Activated CD4-positive, alpha-beta T cell treated with anti-CD3 and anti-CD28 coated beads for 36 hours (primary cell): ENCODE measurements at regions of chr16 and their contacts with region 1.

Region 1: DNA sequence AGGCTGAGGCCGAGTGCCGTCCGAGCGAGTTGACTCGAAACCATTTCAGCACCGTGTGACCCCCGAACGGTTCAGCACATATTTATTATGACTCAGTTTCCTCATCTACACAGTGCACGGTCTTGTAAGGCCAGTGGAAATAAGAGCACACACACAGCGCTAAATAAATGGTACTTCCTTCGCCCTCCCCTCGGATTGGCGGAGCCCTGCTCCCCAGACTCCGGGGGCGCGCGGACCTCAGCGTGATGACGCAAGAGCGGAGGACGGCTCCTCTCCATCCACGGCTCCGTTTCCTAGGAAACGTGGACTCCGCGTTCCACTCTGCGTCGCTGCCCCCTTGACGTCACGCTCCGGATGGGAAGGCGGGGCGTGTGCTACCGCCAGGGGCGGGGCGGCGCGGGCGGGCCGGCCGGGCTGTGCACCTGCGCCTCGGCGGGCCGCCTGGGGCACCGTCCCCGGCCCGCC is at the start of gene PARD6A:
- DNase-seq: peak; percentile 98
- ATAC-seq: peak; percentile 83
- H3K4me3 Mint-ChIP-seq: peak within 1 kb of the TSS; percentile 90
- H3K27ac Mint-ChIP-seq: peak within 1 kb of the TSS; percentile 91
- H3K4me1 Mint-ChIP-seq: peaks cover 21% of the 10 kb centered on the region
- H3K27me3 Mint-ChIP-seq: no peaks in the 10 kb centered on the region
- total RNA-seq, gene PARD6A: 7.8 to 8.7 TPM

Region 2: GRCh38 chr16:67159593-67160406 is 500.8 kb before region 1 on chr16 and contains the starts of genes FBXL8 and TRADD:
- CTCF ChIA-PET with region 1: no interaction called
- POLR2A ChIA-PET with region 1: no interaction called
- intact Hi-C with region 1: loop called in 1 of 2 experiments (anchors 5 kb)
- DNase-seq: peak; percentile 88
- ATAC-seq: peak; percentile 63
- H3K4me3 Mint-ChIP-seq: peak within 1 kb of the TSS; percentile 91
- H3K27ac Mint-ChIP-seq: peak within 1 kb of the TSS; percentile 93
- H3K4me1 Mint-ChIP-seq: peaks cover 48% of the 10 kb centered on the region
- H3K27me3 Mint-ChIP-seq: peaks cover 12% of the 10 kb centered on the region
- total RNA-seq, gene FBXL8: 15.5 to 21.0 TPM
- total RNA-seq, gene TRADD: 22.0 to 34.0 TPM

Region 3: GRCh38 chr16:67246934-67247697 is 413.5 kb before region 1 on chr16 and contains the start of gene FHOD1:
- CTCF ChIA-PET with region 1: interaction called, 3 read pairs
- POLR2A ChIA-PET with region 1: no interaction called
- intact Hi-C with region 1: loop called (anchors 1 to 5 kb)
- DNase-seq: peak; percentile 99
- ATAC-seq: peak; percentile 74
- H3K4me3 Mint-ChIP-seq: peak within 1 kb of the TSS; percentile 87
- H3K27ac Mint-ChIP-seq: peak within 1 kb of the TSS; percentile 85
- H3K4me1 Mint-ChIP-seq: peaks cover 52% of the 10 kb centered on the region
- H3K27me3 Mint-ChIP-seq: peaks cover 11% of the 10 kb centered on the region
- total RNA-seq, gene FHOD1: 75.5 to 77.2 TPM

Region 4: GRCh38 chr16:67546761-67547422 is 113.7 kb before region 1 on chr16:
- CTCF ChIA-PET with region 1: interaction called, 14 read pairs
- POLR2A ChIA-PET with region 1: no interaction called
- intact Hi-C with region 1: loop called in 1 of 2 experiments (anchors 5 kb)
- DNase-seq: peak; percentile 86
- ATAC-seq: peak; percentile 63
- H3K4me3 Mint-ChIP-seq: no peak overlapping the region
- H3K27ac Mint-ChIP-seq: peak overlapping the region; percentile 89
- H3K4me1 Mint-ChIP-seq: peaks cover 35% of the 10 kb centered on the region
- H3K27me3 Mint-ChIP-seq: no peaks in the 10 kb centered on the region

Region 5: GRCh38 chr16:67628216-67628615 is 32.4 kb before region 1 on chr16:
- CTCF ChIA-PET with region 1: no interaction called
- POLR2A ChIA-PET with region 1: no interaction called
- intact Hi-C with region 1: no loop called
- DNase-seq: no peak
- ATAC-seq: no peak
- H3K4me3 Mint-ChIP-seq: no peak overlapping the region
- H3K27ac Mint-ChIP-seq: no peak overlapping the region
- H3K4me1 Mint-ChIP-seq: no peaks in the 10 kb centered on the region
- H3K27me3 Mint-ChIP-seq: no peaks in the 10 kb centered on the region

Region 6: DNA sequence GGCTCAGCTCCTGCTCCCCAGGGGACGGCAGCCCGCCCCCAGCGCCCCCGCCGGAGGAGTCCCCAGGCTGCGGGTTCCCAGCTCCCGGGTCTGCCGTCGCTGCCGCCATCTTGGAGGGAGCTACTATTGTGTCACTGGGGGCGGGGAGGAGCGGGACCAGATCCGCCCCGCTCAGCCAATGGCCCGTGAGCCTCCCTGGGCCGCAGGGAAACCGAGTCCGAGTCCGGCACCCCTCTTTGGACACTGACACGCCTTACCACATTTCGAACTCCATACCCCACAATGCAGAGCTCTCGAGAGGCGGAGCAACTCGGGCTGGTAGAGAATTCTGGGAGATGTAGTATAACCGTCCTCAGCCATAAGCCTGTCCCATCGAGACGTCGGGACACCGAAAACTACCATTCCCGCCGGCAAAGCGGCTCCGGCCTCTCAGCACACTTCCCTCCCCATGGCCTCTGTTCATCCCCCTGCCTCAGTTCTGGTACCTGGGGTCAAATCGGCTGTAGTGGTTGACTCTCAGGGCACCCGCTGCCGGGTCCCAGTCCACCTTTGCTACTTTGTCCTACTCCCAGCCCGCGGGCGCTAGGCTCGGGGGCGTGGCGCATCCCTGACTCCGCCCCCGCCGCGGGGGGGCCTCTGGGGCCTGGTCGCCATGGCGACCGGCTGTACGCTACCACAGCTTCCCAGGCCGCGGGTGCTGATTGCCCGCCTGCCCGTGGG is 146.0 kb after region 1 on chr16 and contains the starts of genes RANBP10 and TSNAXIP1:
- CTCF ChIA-PET with region 1: no interaction called
- POLR2A ChIA-PET with region 1: interaction called, 4 read pairs
- intact Hi-C with region 1: loop called in 1 of 2 experiments (anchors 1 kb)
- DNase-seq: peak; percentile 98
- ATAC-seq: peak; percentile 96
- H3K4me3 Mint-ChIP-seq: peak within 1 kb of the TSS; percentile 91
- H3K27ac Mint-ChIP-seq: peak within 1 kb of the TSS; percentile 91
- H3K4me1 Mint-ChIP-seq: peaks cover 39% of the 10 kb centered on the region
- H3K27me3 Mint-ChIP-seq: no peaks in the 10 kb centered on the region
- total RNA-seq, gene RANBP10: 15.6 to 18.0 TPM
- total RNA-seq, gene TSNAXIP1: 0.62 to 1.1 TPM

Region 7: GRCh38 chr16:67968400-67969253 is 308.0 kb after region 1 on chr16 and contains the start of gene SLC12A4:
- CTCF ChIA-PET with region 1: no interaction called
- POLR2A ChIA-PET with region 1: no interaction called
- intact Hi-C with region 1: loop called in 1 of 2 experiments (anchors 1 kb)
- DNase-seq: peak; percentile 94
- ATAC-seq: peak; percentile 90
- H3K4me3 Mint-ChIP-seq: peak within 1 kb of the TSS; percentile 84
- H3K27ac Mint-ChIP-seq: peak within 1 kb of the TSS; percentile 80
- H3K4me1 Mint-ChIP-seq: peaks cover 14% of the 10 kb centered on the region
- H3K27me3 Mint-ChIP-seq: no peaks in the 10 kb centered on the region
- total RNA-seq, gene SLC12A4: 21.8 to 25.8 TPM

Region 8: DNA sequence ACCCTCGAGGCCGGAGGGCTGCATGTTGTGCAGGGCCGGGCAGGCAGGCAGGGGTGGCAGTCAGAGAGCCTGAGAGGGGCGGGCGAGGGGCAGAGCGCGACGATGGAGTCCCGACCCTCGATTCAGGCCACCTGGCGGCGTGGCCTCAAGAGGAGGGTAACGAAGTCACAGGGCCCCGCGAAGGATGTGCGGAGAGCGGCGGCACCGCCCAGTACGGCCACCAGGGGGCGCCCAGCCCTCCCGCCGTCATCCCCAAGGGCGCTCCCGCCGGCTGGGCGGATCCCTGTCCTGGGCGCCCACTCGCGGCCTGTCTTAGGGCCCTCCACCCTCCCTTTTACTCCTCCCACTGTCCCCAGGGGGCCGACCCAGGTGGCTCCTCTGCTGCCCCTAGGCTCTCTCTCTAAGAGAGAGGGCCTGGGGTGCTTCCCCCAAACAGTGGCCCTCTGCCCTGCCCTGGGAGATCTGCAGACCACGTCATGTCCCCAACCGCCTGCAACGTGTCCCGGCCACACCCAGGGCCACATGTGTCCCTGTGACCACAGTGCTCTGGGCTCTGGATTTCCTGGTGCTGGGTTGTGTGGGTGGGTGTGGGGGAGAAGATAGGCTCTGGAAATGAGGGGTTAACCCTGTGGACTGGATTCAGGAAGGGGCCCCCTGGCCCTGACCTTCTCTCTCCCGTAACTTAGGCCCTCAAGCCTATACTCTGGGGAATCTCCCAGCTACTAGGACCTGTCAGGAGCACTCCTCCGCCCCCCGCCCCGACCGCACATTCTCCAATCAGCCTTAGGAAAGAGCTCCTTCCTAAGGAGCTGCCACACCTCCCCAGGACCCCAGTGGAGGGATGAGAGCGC is 332.8 kb after region 1 on chr16:
- CTCF ChIA-PET with region 1: no interaction called
- POLR2A ChIA-PET with region 1: no interaction called
- intact Hi-C with region 1: no loop called
- DNase-seq: peak; percentile 92
- ATAC-seq: peak; percentile 89
- H3K4me3 Mint-ChIP-seq: peak overlapping the region; percentile 69
- H3K27ac Mint-ChIP-seq: peak overlapping the region; percentile 96
- H3K4me1 Mint-ChIP-seq: peaks cover 38% of the 10 kb centered on the region
- H3K27me3 Mint-ChIP-seq: no peaks in the 10 kb centered on the region